ENCODE measurements at regions of chr7 and their contacts with region 1.

Region 1: GRCh38 chr7:37495574-37496184 is 47.0 kb upstream of the ELMO1 start:
- DNase-seq: peak; percentile 52
- ATAC-seq: peak; percentile 68
- H3K4me3 ChIP-seq: no peak overlapping the region
- H3K4me3 Mint-ChIP-seq: no peak overlapping the region
- H3K27ac ChIP-seq: no peak overlapping the region
- H3K27ac Mint-ChIP-seq: no peak overlapping the region
- H3K4me1 ChIP-seq: no peaks in the 10 kb centered on the region
- H3K4me1 Mint-ChIP-seq: no peaks in the 10 kb centered on the region
- H3K27me3 ChIP-seq: no peaks in the 10 kb centered on the region
- H3K27me3 Mint-ChIP-seq: no peaks in the 10 kb centered on the region
- CTCF ChIP-seq: peak; percentile 96

Region 2: GRCh38 chr7:37208528-37208927 is 287.2 kb before region 1 on chr7:
- CTCF ChIA-PET with region 1: interaction called, 63 read pairs
- POLR2A ChIA-PET with region 1: no interaction called
- intact Hi-C with region 1: loop called (anchors 1 kb)
- DNase-seq: peak; percentile 53
- ATAC-seq: peak; percentile 81
- H3K4me3 ChIP-seq: no peak overlapping the region
- H3K4me3 Mint-ChIP-seq: no peak overlapping the region
- H3K27ac ChIP-seq: peak overlapping the region in 1 of 2 donors; percentile 31
- H3K27ac Mint-ChIP-seq: peak overlapping the region; percentile 32
- H3K4me1 ChIP-seq: peaks cover 7 to 11% of the 10 kb centered on the region in 2 donors
- H3K4me1 Mint-ChIP-seq: peaks cover 15% of the 10 kb centered on the region
- H3K27me3 ChIP-seq: no peaks in the 10 kb centered on the region
- H3K27me3 Mint-ChIP-seq: no peaks in the 10 kb centered on the region
- CTCF ChIP-seq: peak; percentile 63

Region 3: GRCh38 chr7:37234928-37235327 is 260.8 kb before region 1 on chr7:
- CTCF ChIA-PET with region 1: interaction called, 119 read pairs
- POLR2A ChIA-PET with region 1: no interaction called
- intact Hi-C with region 1: loop called (anchors 1 kb)
- DNase-seq: peak; percentile 58
- ATAC-seq: peak; percentile 24
- H3K4me3 ChIP-seq: no peak overlapping the region
- H3K4me3 Mint-ChIP-seq: no peak overlapping the region
- H3K27ac ChIP-seq: no peak overlapping the region
- H3K27ac Mint-ChIP-seq: no peak overlapping the region
- H3K4me1 ChIP-seq: no peaks in the 10 kb centered on the region
- H3K4me1 Mint-ChIP-seq: peaks cover 2% of the 10 kb centered on the region
- H3K27me3 ChIP-seq: no peaks in the 10 kb centered on the region
- H3K27me3 Mint-ChIP-seq: no peaks in the 10 kb centered on the region
- CTCF ChIP-seq: peak; percentile 81

Region 4: GRCh38 chr7:37433166-37433565 is 62.5 kb before region 1 on chr7:
- CTCF ChIA-PET with region 1: no interaction called
- POLR2A ChIA-PET with region 1: no interaction called
- intact Hi-C with region 1: no loop called
- DNase-seq: no peak
- ATAC-seq: no peak
- H3K4me3 ChIP-seq: no peak overlapping the region
- H3K4me3 Mint-ChIP-seq: no peak overlapping the region
- H3K27ac ChIP-seq: no peak overlapping the region
- H3K27ac Mint-ChIP-seq: no peak overlapping the region
- H3K4me1 ChIP-seq: peaks cover 24 to 28% of the 10 kb centered on the region in 2 donors
- H3K4me1 Mint-ChIP-seq: peaks cover 55% of the 10 kb centered on the region
- H3K27me3 ChIP-seq: no peaks in the 10 kb centered on the region
- H3K27me3 Mint-ChIP-seq: no peaks in the 10 kb centered on the region
- CTCF ChIP-seq: no peak

Region 5: GRCh38 chr7:37484426-37485073 is 11.1 kb before region 1 on chr7:
- CTCF ChIA-PET with region 1: interaction called, 10 read pairs
- POLR2A ChIA-PET with region 1: no interaction called
- intact Hi-C with region 1: no loop called
- DNase-seq: no peak
- ATAC-seq: no peak
- H3K4me3 ChIP-seq: no peak overlapping the region
- H3K4me3 Mint-ChIP-seq: no peak overlapping the region
- H3K27ac ChIP-seq: no peak overlapping the region
- H3K27ac Mint-ChIP-seq: no peak overlapping the region
- H3K4me1 ChIP-seq: no peaks in the 10 kb centered on the region
- H3K4me1 Mint-ChIP-seq: no peaks in the 10 kb centered on the region
- H3K27me3 ChIP-seq: peaks cover 0 to 4% (median 0%) of the 10 kb centered on the region in 4 experiments
- H3K27me3 Mint-ChIP-seq: peaks cover 34% of the 10 kb centered on the region
- CTCF ChIP-seq: no peak

Region 6: DNA sequence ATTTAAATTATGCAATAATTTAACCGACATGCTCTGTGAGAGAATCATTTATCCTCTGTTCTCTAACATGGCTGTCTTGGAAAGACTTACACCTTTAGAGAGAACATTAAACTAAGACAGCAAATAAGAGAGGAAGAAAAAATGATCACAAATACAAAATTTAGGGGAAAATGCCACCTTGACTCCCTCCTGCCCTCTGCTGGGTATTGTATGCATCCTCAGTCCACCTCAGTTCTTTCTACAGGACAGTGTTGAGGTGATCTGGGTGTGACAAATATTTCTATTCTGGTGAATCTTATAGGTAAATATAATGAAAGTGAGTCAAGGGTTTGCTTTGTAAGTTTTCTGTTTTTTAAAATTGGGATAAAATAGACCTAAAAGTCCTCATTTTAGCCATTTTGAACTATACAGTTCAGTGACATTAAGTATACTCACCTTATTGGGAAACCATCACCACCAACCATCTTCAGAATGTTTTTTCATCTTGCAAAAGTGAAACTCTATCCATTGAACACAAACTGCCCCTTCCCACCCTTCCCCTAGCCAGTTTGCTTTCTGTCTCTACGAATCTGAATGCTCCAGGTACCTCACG is 14.5 kb after region 1 on chr7:
- CTCF ChIA-PET with region 1: interaction called, 70 read pairs
- POLR2A ChIA-PET with region 1: no interaction called
- intact Hi-C with region 1: no loop called
- DNase-seq: peak; percentile 46
- ATAC-seq: no peak
- H3K4me3 ChIP-seq: no peak overlapping the region
- H3K4me3 Mint-ChIP-seq: no peak overlapping the region
- H3K27ac ChIP-seq: no peak overlapping the region
- H3K27ac Mint-ChIP-seq: no peak overlapping the region
- H3K4me1 ChIP-seq: no peaks in the 10 kb centered on the region
- H3K4me1 Mint-ChIP-seq: no peaks in the 10 kb centered on the region
- H3K27me3 ChIP-seq: peaks cover 0 to 11% (median 2%) of the 10 kb centered on the region in 4 experiments
- H3K27me3 Mint-ChIP-seq: peaks cover 33% of the 10 kb centered on the region
- CTCF ChIP-seq: peak; percentile 88